ENCODE measurements at regions of chr20 and their contacts with region 1.

Region 1: DNA sequence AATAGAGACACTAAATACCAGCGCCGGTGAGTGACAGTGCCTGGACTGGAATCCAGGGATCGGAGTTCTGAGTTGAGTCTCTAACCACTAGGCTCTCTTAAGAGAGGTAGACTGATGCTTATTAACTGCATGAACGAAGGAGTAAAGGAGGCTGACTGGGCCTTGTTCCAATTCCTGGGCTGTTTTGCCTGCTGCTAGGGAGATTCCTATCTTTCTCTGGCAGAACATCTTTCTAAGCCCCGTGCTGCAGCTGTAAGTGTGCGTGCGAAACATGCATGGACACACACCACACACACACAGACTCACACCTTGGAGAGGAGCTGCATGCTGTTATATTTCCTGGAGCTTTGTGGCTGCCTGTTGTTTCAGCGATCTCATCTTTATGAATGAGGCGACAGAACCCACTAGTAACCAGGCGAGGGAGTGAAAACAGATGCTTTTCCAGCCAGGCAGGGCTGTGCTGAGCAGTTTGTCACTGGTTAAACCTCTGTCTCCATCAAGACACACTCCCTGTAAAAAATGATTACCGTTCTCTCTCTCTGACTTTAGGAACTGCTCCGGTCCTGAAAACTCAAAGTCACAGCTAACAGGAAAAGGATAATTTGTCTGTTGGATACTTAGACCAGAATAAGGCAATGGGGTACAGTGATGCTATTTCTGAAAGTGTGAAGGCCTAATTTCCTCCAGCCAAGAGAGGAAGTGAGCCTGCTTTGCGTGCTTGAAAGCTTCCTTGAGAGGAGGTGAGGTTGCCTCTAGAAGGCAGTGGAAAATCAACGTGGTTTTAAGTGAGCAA is 157.4 kb upstream of the ZNF217 start:
- DNase-seq: no peak
- H3K4me3 ChIP-seq: no peak overlapping the region
- H3K27ac ChIP-seq: no peak overlapping the region
- H3K4me1 ChIP-seq: peaks cover 33% of the 10 kb centered on the region
- H3K27me3 ChIP-seq: no peaks in the 10 kb centered on the region
- CTCF ChIP-seq: no peak

Region 2: GRCh38 chr20:53594068-53595017 is 156.7 kb before region 1 on chr20:
- CTCF ChIA-PET with region 1: no interaction called
- dilution Hi-C with region 1: loop called (anchors 25 kb)
- in situ Hi-C with region 1: no loop called
- intact Hi-C with region 1: no loop called
- DNase-seq: peak; percentile 85
- H3K4me3 ChIP-seq: peak overlapping the region; percentile 67 to 85 (median 83)
- H3K27ac ChIP-seq: peak overlapping the region; percentile 81
- H3K4me1 ChIP-seq: peaks cover 28% of the 10 kb centered on the region
- H3K27me3 ChIP-seq: no peaks in the 10 kb centered on the region
- CTCF ChIP-seq: no peak

Region 3: GRCh38 chr20:53794529-53795115 is 43.6 kb after region 1 on chr20:
- CTCF ChIA-PET with region 1: no interaction called
- dilution Hi-C with region 1: loop called (anchors 5 kb)
- in situ Hi-C with region 1: no loop called
- intact Hi-C with region 1: no loop called
- DNase-seq: no peak
- H3K4me3 ChIP-seq: no peak overlapping the region
- H3K27ac ChIP-seq: peak overlapping the region; percentile 65
- H3K4me1 ChIP-seq: peaks cover 47% of the 10 kb centered on the region
- H3K27me3 ChIP-seq: no peaks in the 10 kb centered on the region
- CTCF ChIP-seq: no peak

Region 4: GRCh38 chr20:53839423-53840176 is 88.6 kb after region 1 on chr20:
- CTCF ChIA-PET with region 1: no interaction called
- dilution Hi-C with region 1: loop called (anchors 5 kb)
- in situ Hi-C with region 1: no loop called
- intact Hi-C with region 1: no loop called
- DNase-seq: no peak
- H3K4me3 ChIP-seq: no peak overlapping the region
- H3K27ac ChIP-seq: no peak overlapping the region
- H3K4me1 ChIP-seq: no peaks in the 10 kb centered on the region
- H3K27me3 ChIP-seq: no peaks in the 10 kb centered on the region
- CTCF ChIP-seq: no peak

Region 5: GRCh38 chr20:53915446-53916172 is 164.6 kb after region 1 on chr20:
- CTCF ChIA-PET with region 1: no interaction called
- dilution Hi-C with region 1: loop called (anchors 25 kb)
- in situ Hi-C with region 1: loop called in 1 of 2 experiments (anchors 25 kb)
- intact Hi-C with region 1: loop called (anchors 5 kb)
- DNase-seq: peak; percentile 91
- H3K4me3 ChIP-seq: peak overlapping the region; percentile 42 to 50 (median 48)
- H3K27ac ChIP-seq: peak overlapping the region; percentile 76
- H3K4me1 ChIP-seq: peaks cover 46% of the 10 kb centered on the region
- H3K27me3 ChIP-seq: no peaks in the 10 kb centered on the region
- CTCF ChIP-seq: peak; percentile 82 to 86